ENCODE measurements at regions of chr7 and their contacts with region 1.

Region 1: DNA sequence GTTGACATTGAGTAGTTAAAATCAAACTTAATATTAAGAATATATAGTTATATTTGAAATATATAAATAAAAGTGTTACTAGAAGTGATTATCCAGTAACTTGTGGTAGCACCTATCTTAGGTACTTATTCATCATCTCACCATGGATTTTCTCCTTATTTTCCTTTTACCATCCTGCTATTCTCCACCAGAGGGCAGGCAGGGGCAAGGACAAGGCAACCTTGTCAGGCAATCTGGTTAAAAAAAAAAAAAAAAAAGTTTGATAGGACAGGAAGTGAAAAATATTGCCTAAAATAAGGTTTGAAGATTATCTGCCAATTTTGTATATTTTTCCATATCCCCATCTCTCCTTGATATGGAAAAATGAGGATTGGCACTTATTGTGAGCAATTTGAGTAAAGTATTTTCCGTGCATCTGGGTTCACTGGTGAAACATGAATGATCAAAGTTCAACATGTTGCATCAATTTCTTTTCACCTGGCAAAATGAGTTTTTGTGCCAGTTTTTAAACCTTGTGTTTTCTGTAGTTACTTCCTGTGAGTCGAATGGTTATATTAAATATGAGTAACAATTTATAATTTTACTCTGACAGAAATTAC is 256.7 kb downstream of the AGMO start:
- DNase-seq: peak; percentile 44 to 72
- H3K4me3 ChIP-seq: no peak overlapping the region
- H3K4me1 ChIP-seq: no peaks in the 10 kb centered on the region
- H3K27me3 ChIP-seq: peaks cover 3% of the 10 kb centered on the region; the same call in 1 of the 2 replicates

Region 2: DNA sequence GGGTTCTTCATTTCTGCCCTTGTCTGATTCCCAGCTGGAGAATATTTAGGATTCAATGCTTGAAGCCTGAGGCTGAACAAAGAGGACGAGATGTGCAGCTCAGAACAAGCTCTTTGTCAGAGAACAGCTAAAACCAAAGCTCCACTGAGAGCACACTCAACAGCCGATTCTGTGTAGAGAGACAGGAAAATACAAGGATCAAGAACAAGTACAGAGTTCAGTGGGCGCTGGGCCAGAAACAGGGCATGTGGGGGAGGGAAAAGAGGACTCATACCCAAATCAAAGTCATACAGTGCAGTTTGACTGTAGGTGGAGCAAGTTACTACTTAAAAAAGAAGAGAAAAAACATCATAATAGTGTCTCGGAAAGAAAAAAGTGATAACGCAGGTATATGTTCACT is 256.7 kb after region 1 on chr7 and contains the start of gene AGMO:
- in situ Hi-C with region 1: no loop called
- DNase-seq: peak in 1 of 2 experiments; percentile 25
- H3K4me3 ChIP-seq: no peak within 1 kb of the TSS
- H3K4me1 ChIP-seq: no peaks in the 10 kb centered on the region
- H3K27me3 ChIP-seq: no peaks in the 10 kb centered on the region

Region 3: GRCh38 chr7:15720849-15721471 is 415.9 kb after region 1 on chr7:
- in situ Hi-C with region 1: loop called (anchors 25 kb)
- DNase-seq: peak; percentile 53 to 59
- H3K4me3 ChIP-seq: no peak overlapping the region
- H3K4me1 ChIP-seq: peaks cover 16% of the 10 kb centered on the region
- H3K27me3 ChIP-seq: no peaks in the 10 kb centered on the region; the same call in 1 of the 2 replicates

Region 4: GRCh38 chr7:16071246-16071857 is 766.3 kb after region 1 on chr7:
- in situ Hi-C with region 1: loop called (anchors 10 kb)
- DNase-seq: peak; percentile 23 to 65
- H3K4me3 ChIP-seq: no peak overlapping the region
- H3K4me1 ChIP-seq: no peaks in the 10 kb centered on the region
- H3K27me3 ChIP-seq: peaks cover 3% of the 10 kb centered on the region; the same call in 1 of the 2 replicates